Motor neuron (in vitro differentiated cells): ENCODE measurements at regions of chr5 and their contacts with region 1.

Region 1: DNA sequence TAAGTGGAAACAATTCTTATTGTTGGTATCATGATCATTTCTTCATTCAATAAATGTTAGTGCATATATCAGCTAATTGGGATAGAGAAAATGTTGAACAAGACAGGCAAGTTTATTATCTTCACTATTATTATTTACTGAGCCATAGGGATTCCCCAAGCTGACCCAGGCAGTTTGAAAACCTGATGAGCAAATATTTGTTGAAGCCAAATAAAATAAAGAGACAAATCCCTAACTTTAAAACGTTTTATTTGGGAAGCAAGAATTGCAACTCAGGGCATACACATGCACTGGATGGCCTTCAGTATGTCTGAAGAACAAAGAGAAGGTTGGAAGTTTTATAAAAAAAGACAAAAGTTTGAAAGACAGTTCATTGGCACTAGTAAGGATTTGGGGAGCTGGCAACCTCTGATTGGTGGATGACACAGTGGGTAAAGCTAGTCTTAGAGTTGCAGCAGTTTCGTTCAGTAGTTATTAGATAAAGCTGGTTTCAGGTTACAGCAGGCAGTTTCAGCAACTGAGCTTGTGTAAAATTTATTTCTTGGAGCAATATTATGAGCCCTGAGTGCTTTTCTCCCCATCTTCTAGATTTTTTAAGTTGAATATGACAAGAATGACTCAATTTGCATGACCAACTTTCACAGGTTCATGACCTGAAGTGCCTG is 44.7 kb upstream of the PRLR start:
- ATAC-seq: no peak
- H3K4me3 ChIP-seq: no peak overlapping the region
- H3K27ac ChIP-seq: no peak overlapping the region
- H3K4me1 ChIP-seq: no peaks in the 10 kb centered on the region

Region 2: GRCh38 chr5:35003018-35003957 is 271.7 kb before region 1 on chr5:
- in situ Hi-C with region 1: no loop called
- ATAC-seq: peak; percentile 45 to 89 (median 63)
- H3K4me3 ChIP-seq: no peak overlapping the region
- H3K27ac ChIP-seq: no peak overlapping the region
- H3K4me1 ChIP-seq: no peaks in the 10 kb centered on the region

Region 3: GRCh38 chr5:35436410-35437057 is 161.6 kb after region 1 on chr5:
- in situ Hi-C with region 1: loop called in 1 of 9 experiments (anchors 25 kb)
- ATAC-seq: peak in 5 of 8 experiments; percentile 27 to 63 (median 46)
- H3K4me3 ChIP-seq: no peak overlapping the region
- H3K27ac ChIP-seq: no peak overlapping the region
- H3K4me1 ChIP-seq: no peaks in the 10 kb centered on the region